ENCODE measurements at regions of chr9 and their contacts with region 1.

Region 1: GRCh38 chr9:35790385-35791296 is 750 bp upstream of the NPR2 start:
- DNase-seq: peak; percentile 71 to 90 (median 79)
- H3K4me3 ChIP-seq: no peak overlapping the region
- H3K27ac ChIP-seq: peak overlapping the region in 2 of 5 donors; percentile 64 to 82
- H3K4me1 ChIP-seq: peaks cover 5 to 23% of the 10 kb centered on the region in 2 donors
- H3K27me3 ChIP-seq: no peaks in the 10 kb centered on the region
- CTCF ChIP-seq: peak; percentile 84 to 96 (median 88)
- POLR2A ChIP-seq: no peak

Region 2: DNA sequence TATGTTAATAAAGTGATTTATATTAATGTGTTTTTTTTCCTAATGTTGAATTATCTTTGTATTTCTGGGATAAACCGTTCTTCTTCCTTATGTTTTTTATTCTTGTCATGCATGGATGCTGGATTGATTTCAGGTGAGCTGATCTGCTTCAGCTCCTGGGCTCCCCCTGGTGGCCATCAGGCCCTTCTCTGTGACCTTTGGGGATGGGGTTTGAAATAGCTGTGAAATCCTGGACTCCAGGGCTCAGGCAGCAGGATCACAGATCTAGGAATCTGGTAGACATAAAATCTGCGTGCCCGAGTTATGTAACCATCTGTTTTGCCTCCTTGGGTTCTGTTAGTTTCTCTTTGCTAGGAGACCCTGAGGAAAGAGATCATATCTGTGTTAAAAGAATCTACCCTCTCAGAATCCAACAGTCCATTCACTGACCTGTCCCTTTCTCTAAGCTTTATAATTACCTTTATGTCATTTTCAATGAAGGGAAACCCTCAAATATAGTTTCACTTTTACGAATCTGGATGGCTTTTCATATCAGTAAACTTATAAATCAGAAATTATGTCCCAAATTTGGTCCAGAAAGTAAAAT is 91.7 kb after region 1 on chr9:
- intact Hi-C with region 1: loop called (anchors 2 to 5 kb)
- DNase-seq: peak; percentile 73 to 94 (median 86)
- H3K4me3 ChIP-seq: no peak overlapping the region
- H3K27ac ChIP-seq: no peak overlapping the region
- H3K4me1 ChIP-seq: no peaks in the 10 kb centered on the region
- H3K27me3 ChIP-seq: no peaks in the 10 kb centered on the region
- CTCF ChIP-seq: peak; percentile 85 to 98 (median 94)
- POLR2A ChIP-seq: no peak

Measured in adrenal gland (tissue), 19 donors.